Heart right ventricle (tissue), 16 donors: ENCODE measurements at regions of chr9 and their contacts with region 1.

Region 1: DNA sequence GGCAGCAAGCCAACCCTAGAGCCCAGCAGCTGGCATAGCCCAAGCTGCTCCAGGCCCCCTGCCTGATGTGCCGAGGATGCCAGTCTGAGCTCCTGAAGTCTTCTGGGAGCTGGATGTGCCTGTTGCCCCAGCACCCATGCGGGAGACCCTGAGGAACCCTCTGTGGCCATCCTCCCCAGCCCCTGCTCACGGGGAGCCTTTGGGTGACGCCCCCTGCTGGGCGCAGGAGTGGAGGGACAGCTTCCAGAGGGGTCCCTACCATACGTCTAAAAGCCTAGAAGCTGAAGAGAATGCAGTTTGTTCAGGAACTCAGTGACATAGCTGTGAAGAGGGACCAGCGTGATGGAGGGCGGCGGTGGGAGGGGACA is 33.1 kb upstream of the MVB12B start:
- DNase-seq: no peak
- ATAC-seq: peak in 1 of 8 donors; percentile 14
- H3K4me3 ChIP-seq: no peak overlapping the region
- H3K27ac ChIP-seq: no peak overlapping the region
- H3K4me1 ChIP-seq: no peaks in the 10 kb centered on the region
- H3K27me3 ChIP-seq: peaks cover 0 to 23% (median 0%) of the 10 kb centered on the region in 7 donors
- CTCF ChIP-seq: peak in 2 of 9 donors; percentile 14 to 18

Region 2: DNA sequence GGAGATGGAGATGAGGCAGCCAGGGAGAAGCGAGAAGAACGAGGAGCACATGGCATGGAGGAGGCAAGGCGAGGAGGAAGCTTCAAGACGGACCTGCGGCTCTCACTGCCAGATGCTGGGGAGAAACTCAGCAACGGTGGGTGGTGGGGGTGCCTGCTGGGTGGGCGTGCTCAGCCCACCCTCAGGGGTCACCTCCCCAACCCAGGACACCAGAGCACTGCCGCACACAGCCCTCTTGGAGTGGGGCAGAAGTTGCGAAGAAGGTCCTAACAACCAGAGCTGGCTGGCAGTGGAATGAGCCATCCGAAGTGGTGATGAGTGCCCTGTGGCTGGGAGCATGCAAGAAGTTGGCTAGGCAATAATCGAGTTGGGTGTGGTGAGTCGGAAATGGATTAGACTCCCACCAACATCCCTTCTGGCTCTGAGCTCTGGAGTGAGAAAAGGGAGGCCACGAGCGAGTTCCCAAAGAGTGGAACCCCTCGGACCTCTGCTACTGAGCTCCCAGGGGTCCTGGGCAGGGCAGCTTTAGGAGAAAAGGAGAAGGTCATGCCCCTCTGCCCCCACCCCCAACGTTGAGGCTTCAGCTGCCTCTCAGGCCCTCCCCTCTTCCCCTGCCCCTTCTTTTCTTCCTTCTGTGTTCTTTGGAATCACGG is 179.6 kb before region 1 on chr9:
- intact Hi-C with region 1: loop called in 1 of 10 experiments (anchors 5 kb)
- DNase-seq: no peak
- ATAC-seq: no peak
- H3K4me3 ChIP-seq: no peak overlapping the region
- H3K27ac ChIP-seq: no peak overlapping the region
- H3K4me1 ChIP-seq: no peaks in the 10 kb centered on the region
- H3K27me3 ChIP-seq: peaks cover 0 to 24% (median 8%) of the 10 kb centered on the region in 7 donors
- CTCF ChIP-seq: no peak

Region 3: GRCh38 chr9:126564711-126565110 is 271.2 kb after region 1 on chr9:
- intact Hi-C with region 1: loop called in 1 of 10 experiments (anchors 10 kb)
- DNase-seq: no peak
- ATAC-seq: peak in 2 of 8 donors; percentile 16
- H3K4me3 ChIP-seq: no peak overlapping the region
- H3K27ac ChIP-seq: no peak overlapping the region
- H3K4me1 ChIP-seq: peaks cover 0 to 5% (median 0%) of the 10 kb centered on the region in 9 donors
- H3K27me3 ChIP-seq: peaks cover 0 to 58% (median 36%) of the 10 kb centered on the region in 7 donors
- CTCF ChIP-seq: peak in 2 of 9 donors; percentile 6 to 13